GM13977 (cell line): ENCODE measurements at regions of chr11 and their contacts with region 1.

Region 1: DNA sequence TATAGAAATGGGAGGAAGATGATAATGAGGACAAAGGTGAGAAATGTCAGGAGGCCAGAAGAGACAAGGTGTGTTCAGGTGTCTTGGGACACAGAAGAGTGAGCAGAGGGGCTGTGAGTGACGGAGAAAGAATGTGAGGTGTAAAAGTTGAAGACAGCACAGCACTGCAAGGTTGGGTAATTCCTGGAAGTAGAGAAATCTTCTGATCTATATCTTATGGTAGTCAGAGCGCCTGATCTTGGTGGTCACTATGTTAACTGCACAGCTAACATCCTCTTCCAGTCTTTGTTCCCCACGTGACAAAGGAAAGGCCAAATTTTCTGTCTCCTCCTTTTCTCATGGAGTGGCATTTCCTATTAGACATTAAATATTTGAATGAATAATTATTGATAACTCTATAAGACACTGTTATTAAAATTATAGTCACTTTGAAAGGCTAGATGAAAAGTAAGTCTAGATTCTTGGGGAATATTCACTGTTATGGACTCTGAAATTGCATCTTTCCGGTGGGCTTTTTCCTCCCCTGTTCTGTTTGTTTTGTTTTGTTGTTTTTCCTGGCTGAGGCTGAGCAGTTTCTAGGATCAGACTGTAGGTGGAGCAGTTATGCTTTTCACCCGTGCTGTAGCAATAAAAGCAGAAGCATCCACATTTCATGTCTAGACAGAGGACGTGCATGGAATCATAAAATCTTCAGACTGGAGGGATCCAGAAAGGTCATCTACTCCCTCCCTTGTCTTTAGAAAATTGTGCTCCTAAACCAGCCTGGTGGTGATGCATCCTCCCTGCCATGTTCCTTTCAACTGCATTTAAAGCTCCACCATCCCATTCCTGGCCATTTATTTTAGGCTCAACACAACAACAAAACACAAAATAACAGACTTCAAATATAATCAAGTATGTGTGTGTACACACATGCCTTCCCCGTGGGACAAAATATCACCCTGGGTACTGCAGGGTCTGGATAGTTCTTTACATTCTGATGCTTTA is 26.6 kb downstream of the SC5D start:
- DNase-seq: no peak
- CTCF ChIP-seq: peak; percentile 83

Region 2: GRCh38 chr11:121451986-121452608 is 133.0 kb after region 1 on chr11 and contains the start of gene SORL1:
- in situ Hi-C with region 1: loop called (anchors 10 kb)
- DNase-seq: peak; percentile 84
- CTCF ChIP-seq: peak; percentile 82

Region 3: DNA sequence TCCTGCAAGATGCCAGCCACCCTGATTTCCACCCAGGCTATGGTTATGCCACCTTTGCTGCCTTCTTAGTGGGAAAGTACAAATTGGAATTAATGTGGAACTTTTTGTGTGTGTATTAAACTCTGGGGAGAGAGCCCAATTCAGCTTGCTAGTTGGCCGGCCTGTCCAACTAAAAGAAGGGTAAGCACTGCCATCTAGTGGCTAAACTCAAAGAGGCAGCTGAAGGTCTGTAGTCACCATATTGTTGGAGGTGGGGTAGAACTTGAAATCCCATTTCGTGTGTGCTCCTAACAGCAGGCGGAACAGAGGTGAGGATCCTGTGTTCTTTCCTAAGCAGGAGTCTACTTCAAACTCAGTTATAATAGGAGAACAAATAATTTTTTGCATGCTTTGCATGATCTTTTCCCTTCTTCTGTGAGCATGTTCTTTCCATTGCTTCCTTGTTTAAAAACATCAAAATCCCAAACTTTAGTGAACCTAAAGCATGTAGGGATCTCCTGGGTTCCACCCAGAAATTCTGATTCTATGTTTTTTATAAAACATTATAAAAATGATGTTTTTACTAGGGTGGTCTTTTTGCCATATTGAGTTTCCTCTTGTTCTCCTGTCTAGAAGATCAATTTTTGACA is 272.4 kb after region 1 on chr11:
- in situ Hi-C with region 1: loop called (anchors 5 kb)
- DNase-seq: peak; percentile 71
- CTCF ChIP-seq: peak; percentile 76